GM18951 (cell line): ENCODE measurements at regions of chr13 and their contacts with region 1.

Region 1: DNA sequence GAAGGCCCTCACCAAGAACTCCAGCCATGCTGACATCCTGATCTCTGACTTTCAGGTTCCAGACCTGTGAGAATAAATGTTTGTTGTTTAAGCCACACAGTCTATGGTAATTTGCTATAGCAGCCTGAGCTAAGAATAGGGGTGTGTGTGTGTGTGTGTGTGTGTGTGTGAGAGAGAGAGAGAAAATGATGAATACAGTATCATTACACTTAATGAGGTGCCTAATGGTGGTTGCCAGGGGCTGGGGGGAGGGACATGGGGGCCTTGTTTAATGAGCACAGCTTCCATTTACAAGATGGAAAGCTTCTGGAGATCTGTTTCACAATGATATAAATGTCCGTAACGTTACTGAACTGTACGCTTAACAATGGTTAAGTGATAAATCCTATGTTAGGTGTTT is 53.8 kb upstream of the LATS2 start:
- POLR2A ChIP-seq: no peak

Region 2: DNA sequence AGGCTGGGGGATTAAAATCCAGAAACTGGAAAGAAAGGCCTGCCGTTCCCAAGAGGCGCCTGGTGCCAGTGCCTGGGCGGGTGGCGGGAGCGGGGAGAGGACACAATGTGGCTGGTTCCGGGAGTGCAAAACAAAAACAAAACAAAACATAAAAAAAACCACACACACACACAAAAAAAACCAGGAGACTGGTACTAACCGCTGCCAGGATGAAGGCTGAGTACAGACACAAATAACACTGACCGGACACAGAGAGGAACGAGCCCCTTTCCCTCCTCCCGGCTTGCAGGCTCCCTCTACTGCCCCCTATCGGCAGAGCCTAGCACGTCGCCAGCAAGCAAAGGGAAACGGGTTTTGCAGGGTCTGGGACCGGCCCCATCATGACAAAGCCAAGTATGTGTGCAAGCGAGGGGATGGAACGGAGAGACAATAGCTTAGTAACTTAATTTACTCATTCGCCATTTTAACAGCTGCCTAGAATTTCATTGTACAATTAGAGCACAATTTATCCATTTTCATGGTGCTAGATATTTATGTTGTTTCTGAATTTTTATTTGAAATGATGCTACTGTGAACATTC is 361.8 kb after region 1 on chr13:
- in situ Hi-C with region 1: loop called (anchors 10 kb)
- POLR2A ChIP-seq: no peak